Endothelial cell of umbilical vein (primary cell): ENCODE measurements at regions of chr1 and their contacts with region 1.

Region 1: DNA sequence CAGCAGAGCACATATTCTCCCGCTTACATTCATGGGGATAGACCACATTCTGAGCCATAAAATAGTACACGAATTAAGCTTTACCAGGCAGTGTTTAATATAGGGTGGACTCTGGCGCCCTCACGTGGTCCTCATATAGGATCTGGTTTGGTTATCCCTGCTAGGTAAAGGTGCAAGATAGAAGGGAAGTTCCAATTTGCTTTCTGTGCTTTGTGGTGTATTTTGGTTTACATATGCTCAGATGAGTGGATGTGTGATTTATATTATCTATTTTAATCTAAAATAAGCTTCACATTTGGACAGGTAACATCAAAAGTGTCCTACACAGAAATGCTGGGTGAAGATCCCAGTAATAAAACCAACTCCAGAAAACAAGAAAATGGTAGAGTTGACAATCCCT is 3.6 kb downstream of the CR1 start:
- DNase-seq: peak; percentile 72
- H3K4me3 ChIP-seq: no peak overlapping the region
- H3K27ac ChIP-seq: no peak overlapping the region
- H3K4me1 ChIP-seq: peaks cover 4% of the 10 kb centered on the region
- H3K27me3 ChIP-seq: peaks cover 47% of the 10 kb centered on the region in 2 experiments
- CTCF ChIP-seq: peak; percentile 61 to 69
- POLR2A ChIP-seq: no peak

Region 2: DNA sequence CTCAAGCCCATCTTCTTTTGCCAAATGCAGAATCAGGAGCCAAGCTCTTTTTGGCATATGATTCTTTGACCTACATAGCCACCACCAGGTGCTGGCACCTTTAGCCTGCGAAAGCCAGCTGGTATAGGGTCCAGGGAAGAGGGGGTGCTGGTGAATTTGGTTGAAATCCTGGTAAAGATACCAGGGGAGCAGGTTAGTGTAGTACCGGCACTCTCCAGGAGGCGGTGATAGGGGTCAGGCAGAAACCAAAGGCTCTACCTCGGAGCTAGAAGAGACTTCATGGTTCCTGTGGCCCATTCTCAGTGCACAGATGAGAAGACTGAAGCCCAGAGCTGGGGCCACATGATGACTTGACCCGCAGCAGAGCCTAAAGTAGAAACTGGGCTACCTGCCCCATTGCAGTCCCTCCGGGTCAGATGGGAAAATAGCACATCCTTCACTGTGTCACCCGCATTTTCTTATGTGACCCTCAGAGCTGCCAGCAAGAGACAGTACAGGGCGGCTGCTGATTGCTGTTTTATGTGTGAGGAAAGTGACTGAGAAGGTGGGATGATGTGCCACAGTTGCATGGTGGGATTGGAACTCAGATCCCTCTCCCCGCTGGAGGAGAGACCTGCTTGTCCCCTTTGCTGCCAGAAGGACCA is 765.0 kb before region 1 on chr1:
- CTCF ChIA-PET with region 1: interaction called, 7 read pairs
- POLR2A ChIA-PET with region 1: no interaction called
- dilution Hi-C with region 1: no loop called
- intact Hi-C with region 1: loop called (anchors 5 kb)
- DNase-seq: peak; percentile 26
- H3K4me3 ChIP-seq: no peak overlapping the region
- H3K27ac ChIP-seq: no peak overlapping the region
- H3K4me1 ChIP-seq: peaks cover 13% of the 10 kb centered on the region
- H3K27me3 ChIP-seq: no peaks in the 10 kb centered on the region
- CTCF ChIP-seq: peak; percentile 59 to 60
- POLR2A ChIP-seq: no peak

Region 3: GRCh38 chr1:206935491-206936067 is 564.0 kb before region 1 on chr1:
- CTCF ChIA-PET with region 1: interaction called, 18 read pairs
- POLR2A ChIA-PET with region 1: no interaction called
- dilution Hi-C with region 1: no loop called
- intact Hi-C with region 1: loop called (anchors 1 kb)
- DNase-seq: peak; percentile 25
- H3K4me3 ChIP-seq: no peak overlapping the region
- H3K27ac ChIP-seq: no peak overlapping the region
- H3K4me1 ChIP-seq: no peaks in the 10 kb centered on the region
- H3K27me3 ChIP-seq: no peaks in the 10 kb centered on the region
- CTCF ChIP-seq: peak; percentile 68 to 89
- POLR2A ChIP-seq: no peak

Region 4: DNA sequence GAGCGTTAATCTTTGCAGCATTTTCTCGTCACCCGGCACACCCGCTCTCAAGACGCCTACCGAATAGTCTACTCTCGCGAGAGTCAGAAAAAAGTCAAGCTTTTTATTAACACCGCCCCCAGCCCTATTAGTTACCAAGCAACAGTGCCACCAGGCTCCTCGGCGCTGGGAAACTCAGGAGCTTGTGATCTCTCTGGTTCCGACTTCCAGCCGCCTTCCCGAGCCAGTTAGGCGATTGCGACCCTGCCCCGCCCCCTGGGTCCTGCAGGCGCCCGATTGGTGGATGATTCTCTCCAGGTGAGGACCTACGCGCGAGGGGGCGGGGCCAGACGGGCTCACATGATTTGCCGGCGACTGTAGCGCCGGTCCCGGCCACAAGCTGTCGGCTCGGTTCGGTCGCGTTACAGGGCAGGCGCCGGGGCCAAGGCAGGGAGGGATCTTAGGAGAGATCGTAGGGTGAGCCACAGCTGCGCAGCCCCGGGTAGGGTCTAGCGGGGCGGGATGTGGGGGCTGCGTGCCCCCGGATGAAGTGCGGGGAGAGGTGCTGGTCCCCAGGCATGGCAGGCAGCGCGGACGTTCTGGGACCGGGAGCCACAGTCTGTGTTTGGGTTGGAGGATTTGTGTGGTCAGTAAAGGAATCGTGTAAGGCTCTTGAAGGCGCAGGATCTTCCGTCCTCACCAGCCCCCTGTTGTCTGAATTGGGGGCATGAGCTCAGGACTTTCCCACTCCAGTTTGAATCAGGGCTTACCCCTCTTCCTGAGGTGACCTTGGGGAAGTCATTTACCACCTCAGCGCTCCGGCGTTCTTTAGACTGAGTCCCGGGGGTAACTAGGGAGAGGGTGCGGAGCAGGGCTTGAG is 446.4 kb before region 1 on chr1 and contains the start of gene PFKFB2:
- CTCF ChIA-PET with region 1: interaction called, 6 read pairs
- POLR2A ChIA-PET with region 1: no interaction called
- dilution Hi-C with region 1: no loop called
- intact Hi-C with region 1: loop called (anchors 1 kb)
- DNase-seq: peak; percentile 88
- H3K4me3 ChIP-seq: peak within 1 kb of the TSS; percentile 27 to 77 (median 62)
- H3K27ac ChIP-seq: no peak within 1 kb of the TSS
- H3K4me1 ChIP-seq: peaks cover 15% of the 10 kb centered on the region
- H3K27me3 ChIP-seq: peaks cover 0 to 2% of the 10 kb centered on the region in 2 experiments
- CTCF ChIP-seq: no peak
- POLR2A ChIP-seq: no peak
- total RNA-seq, gene PFKFB2: 1.8 and 2.0 TPM in 2 replicates

Region 5: GRCh38 chr1:207084701-207085180 is 414.8 kb before region 1 on chr1:
- CTCF ChIA-PET with region 1: interaction called, 35 read pairs
- POLR2A ChIA-PET with region 1: no interaction called
- dilution Hi-C with region 1: no loop called
- intact Hi-C with region 1: loop called (anchors 1 kb)
- DNase-seq: peak; percentile 75
- H3K4me3 ChIP-seq: no peak overlapping the region
- H3K27ac ChIP-seq: no peak overlapping the region
- H3K4me1 ChIP-seq: no peaks in the 10 kb centered on the region
- H3K27me3 ChIP-seq: peaks cover 2 to 3% of the 10 kb centered on the region in 2 experiments
- CTCF ChIP-seq: peak; percentile 39 to 63
- POLR2A ChIP-seq: no peak

Region 6: DNA sequence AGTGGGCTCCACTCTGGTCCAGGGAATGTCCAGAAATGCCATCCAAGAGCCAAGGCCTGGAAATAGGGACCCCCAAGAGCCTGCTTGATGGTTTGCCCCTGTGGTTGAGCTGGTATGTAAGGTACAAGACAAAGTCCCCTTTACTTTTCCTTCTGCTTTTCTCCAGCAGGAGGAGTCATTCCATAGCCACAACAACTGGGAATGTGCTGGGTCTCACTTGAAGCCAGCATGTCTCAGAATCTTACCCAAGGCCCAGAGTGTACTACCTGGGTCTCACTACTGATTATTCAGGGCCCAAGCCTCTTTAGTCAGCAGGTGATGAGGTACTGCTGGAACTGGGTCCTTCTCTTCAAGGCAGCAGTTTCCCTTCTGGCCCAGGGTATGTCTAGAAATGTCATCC is 240.2 kb before region 1 on chr1:
- CTCF ChIA-PET with region 1: interaction called, 4 read pairs
- POLR2A ChIA-PET with region 1: no interaction called
- dilution Hi-C with region 1: no loop called
- intact Hi-C with region 1: loop called (anchors 5 kb)
- DNase-seq: peak; percentile 78
- H3K4me3 ChIP-seq: no peak overlapping the region
- H3K27ac ChIP-seq: no peak overlapping the region
- H3K4me1 ChIP-seq: no peaks in the 10 kb centered on the region
- H3K27me3 ChIP-seq: no peaks in the 10 kb centered on the region
- CTCF ChIP-seq: peak; percentile 46 to 67
- POLR2A ChIP-seq: no peak